ENCODE measurements at regions of chr6 and their contacts with region 1.

Region 1: GRCh38 chr6:37566111-37566949 is 66.6 kb upstream of the CCDC167 start:
- DNase-seq: peak; percentile 62 to 88
- ATAC-seq: peak; percentile 84
- H3K4me3 ChIP-seq: peak overlapping the region; percentile 13 to 19
- H3K27ac ChIP-seq: no peak overlapping the region
- H3K4me1 ChIP-seq: no peaks in the 10 kb centered on the region
- H3K27me3 ChIP-seq: no peaks in the 10 kb centered on the region

Region 2: GRCh38 chr6:37396476-37397180 is 169.7 kb before region 1 on chr6:
- intact Hi-C with region 1: no loop called
- DNase-seq: no peak
- ATAC-seq: no peak
- H3K4me3 ChIP-seq: no peak overlapping the region
- H3K27ac ChIP-seq: no peak overlapping the region
- H3K4me1 ChIP-seq: no peaks in the 10 kb centered on the region
- H3K27me3 ChIP-seq: no peaks in the 10 kb centered on the region

Region 3: DNA sequence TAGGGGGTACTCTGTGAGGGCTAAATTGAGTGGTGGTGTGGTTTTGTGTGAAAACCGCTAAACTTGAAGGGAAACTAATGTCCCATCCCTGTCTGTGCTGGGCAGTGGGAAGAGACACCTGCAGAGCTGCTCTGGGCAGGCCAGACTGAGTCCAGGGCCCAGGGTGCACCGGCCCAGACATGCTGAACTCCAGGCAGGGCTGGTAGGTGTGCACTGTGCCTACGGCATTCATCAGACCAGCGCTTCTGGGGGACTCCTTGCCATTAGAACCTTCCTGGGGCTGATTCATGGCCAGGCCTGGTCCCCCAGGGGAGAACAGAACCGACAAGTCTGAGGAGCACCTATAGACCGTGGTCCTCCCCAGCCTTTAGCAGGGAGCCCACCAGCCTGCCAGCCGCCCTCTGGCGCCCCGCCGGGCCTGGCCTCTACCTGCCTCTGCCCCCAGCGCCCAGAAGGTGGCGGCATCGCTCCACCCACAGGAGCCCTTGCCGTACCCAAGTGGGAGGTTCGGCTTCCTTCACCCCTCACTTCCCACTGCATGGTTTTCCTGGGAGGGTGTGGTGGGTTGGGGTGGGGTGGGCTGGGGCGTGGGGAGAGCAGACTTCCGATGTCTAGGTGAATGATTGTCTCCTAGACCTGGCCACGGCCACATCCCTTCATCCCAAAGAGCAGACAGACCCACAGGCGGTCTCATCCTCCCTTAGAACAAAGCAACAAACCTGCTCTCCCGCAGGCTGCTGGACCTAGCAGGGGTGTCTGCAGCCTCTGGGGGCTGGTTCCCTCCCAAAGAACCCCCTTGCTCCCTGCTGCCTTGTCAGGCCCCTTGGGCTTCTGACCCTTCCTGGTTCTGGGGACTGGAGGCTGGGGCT is 82.2 kb before region 1 on chr6:
- intact Hi-C with region 1: loop called (anchors 2 kb)
- DNase-seq: peak in 1 of 2 donors; percentile 87
- ATAC-seq: peak; percentile 75
- H3K4me3 ChIP-seq: no peak overlapping the region
- H3K27ac ChIP-seq: no peak overlapping the region
- H3K4me1 ChIP-seq: no peaks in the 10 kb centered on the region
- H3K27me3 ChIP-seq: no peaks in the 10 kb centered on the region